ENCODE measurements at regions of chr9 and their contacts with region 1.

Region 1: DNA sequence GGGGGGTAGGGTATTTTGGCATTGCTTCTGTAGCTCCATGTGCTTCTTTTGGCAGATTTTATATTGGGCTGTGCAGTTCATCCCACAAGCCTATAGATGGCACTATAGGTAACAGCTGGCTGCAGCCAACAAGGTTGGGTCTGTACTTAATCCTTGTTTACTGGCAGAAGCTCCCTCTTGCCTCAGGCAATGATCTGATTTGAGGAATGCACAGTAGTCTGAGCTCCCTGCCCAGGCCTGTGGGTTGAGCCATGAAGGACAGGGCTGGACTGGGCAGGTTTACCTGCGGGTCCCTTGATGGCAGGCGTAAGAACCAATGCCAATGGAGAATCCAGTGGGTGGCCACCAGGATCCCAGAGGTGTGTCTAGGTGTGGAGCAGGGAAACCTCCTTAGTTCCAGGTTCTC is 11.7 kb upstream of the OR1J2 start:
- DNase-seq: no peak
- ATAC-seq: peak; percentile 75
- H3K4me3 ChIP-seq: no peak overlapping the region
- H3K27ac ChIP-seq: no peak overlapping the region
- H3K4me1 ChIP-seq: no peaks in the 10 kb centered on the region
- H3K27me3 ChIP-seq: no peaks in the 10 kb centered on the region; a peak in 1 of 4 replicates
- CTCF ChIP-seq: peak; percentile 69 to 87 (median 87)
- EP300 ChIP-seq: no peak
- POLR2A ChIP-seq: no peak
- RAD21 ChIP-seq: peak; percentile 54

Region 2: GRCh38 chr9:122394265-122395125 is 104.4 kb before region 1 on chr9:
- CTCF ChIA-PET with region 1: no interaction called
- POLR2A ChIA-PET with region 1: no interaction called
- RAD21 ChIA-PET with region 1: no interaction called
- SMC1A ChIA-PET with region 1: no interaction called
- in situ Hi-C with region 1: no loop called
- intact Hi-C with region 1: no loop called
- DNase-seq: no peak
- ATAC-seq: no peak
- H3K4me3 ChIP-seq: no peak overlapping the region
- H3K27ac ChIP-seq: no peak overlapping the region
- H3K4me1 ChIP-seq: peaks cover 7% of the 10 kb centered on the region
- H3K27me3 ChIP-seq: no peaks in the 10 kb centered on the region; a peak in 1 of 4 replicates
- CTCF ChIP-seq: no peak
- EP300 ChIP-seq: no peak
- POLR2A ChIP-seq: no peak
- RAD21 ChIP-seq: no peak

Region 3: GRCh38 chr9:122464633-122465567 is 34.0 kb before region 1 on chr9:
- CTCF ChIA-PET with region 1: interaction called, 10 read pairs
- POLR2A ChIA-PET with region 1: no interaction called
- RAD21 ChIA-PET with region 1: no interaction called
- SMC1A ChIA-PET with region 1: interaction called, 13 read pairs
- in situ Hi-C with region 1: no loop called
- intact Hi-C with region 1: no loop called
- DNase-seq: peak; percentile 45
- ATAC-seq: peak; percentile 84
- H3K4me3 ChIP-seq: peak overlapping the region; percentile 54; the same call in 1 of the 2 replicates
- H3K27ac ChIP-seq: peak overlapping the region; percentile 4; the same call in 1 of the 2 replicates
- H3K4me1 ChIP-seq: no peaks in the 10 kb centered on the region
- H3K27me3 ChIP-seq: no peaks in the 10 kb centered on the region; a peak in 1 of 4 replicates
- CTCF ChIP-seq: peak; percentile 76 to 81 (median 79)
- EP300 ChIP-seq: no peak
- POLR2A ChIP-seq: no peak
- RAD21 ChIP-seq: peak; percentile 77